ENCODE measurements at regions of chr10 and their contacts with region 1.

Region 1: DNA sequence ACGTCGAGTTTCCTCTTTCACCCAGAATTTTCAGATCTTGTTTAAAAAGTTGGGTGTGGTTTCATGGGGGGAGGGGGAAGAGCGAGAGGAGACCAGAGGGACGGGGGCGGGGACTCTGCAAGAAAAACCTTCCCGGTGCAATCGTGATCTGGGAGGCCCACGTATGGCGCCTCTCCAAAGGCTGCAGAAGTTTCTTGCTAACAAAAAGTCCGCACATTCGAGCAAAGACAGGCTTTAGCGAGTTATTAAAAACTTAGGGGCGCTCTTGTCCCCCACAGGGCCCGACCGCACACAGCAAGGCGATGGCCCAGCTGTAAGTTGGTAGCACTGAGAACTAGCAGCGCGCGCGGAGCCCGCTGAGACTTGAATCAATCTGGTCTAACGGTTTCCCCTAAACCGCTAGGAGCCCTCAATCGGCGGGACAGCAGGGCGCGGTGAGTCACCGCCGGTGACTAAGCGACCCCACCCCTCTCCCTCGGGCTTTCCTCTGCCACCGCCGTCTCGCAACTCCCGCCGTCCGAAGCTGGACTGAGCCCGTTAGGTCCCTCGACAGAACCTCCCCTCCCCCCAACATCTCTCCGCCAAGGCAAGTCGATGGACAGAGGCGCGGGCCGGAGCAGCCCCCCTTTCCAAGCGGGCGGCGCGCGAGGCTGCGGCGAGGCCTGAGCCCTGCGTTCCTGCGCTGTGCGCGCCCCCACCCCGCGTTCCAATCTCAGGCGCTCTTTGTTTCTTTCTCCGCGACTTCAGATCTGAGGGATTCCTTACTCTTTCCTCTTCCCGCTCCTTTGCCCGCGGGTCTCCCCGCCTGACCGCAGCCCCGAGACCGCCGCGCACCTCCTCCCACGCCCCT is at the start of gene VIM:
- DNase-seq: peak; percentile 97
- H3K4me3 ChIP-seq: peak within 1 kb of the TSS; percentile 70 to 89 (median 81)
- H3K27ac ChIP-seq: peak within 1 kb of the TSS; percentile 93
- H3K4me1 ChIP-seq: peaks cover 24% of the 10 kb centered on the region
- H3K27me3 ChIP-seq: no peaks in the 10 kb centered on the region
- CTCF ChIP-seq: peak in 1 of 2 donors; percentile 7
- total RNA-seq, gene VIM: 1,327 to 1,978 TPM

Region 2: DNA sequence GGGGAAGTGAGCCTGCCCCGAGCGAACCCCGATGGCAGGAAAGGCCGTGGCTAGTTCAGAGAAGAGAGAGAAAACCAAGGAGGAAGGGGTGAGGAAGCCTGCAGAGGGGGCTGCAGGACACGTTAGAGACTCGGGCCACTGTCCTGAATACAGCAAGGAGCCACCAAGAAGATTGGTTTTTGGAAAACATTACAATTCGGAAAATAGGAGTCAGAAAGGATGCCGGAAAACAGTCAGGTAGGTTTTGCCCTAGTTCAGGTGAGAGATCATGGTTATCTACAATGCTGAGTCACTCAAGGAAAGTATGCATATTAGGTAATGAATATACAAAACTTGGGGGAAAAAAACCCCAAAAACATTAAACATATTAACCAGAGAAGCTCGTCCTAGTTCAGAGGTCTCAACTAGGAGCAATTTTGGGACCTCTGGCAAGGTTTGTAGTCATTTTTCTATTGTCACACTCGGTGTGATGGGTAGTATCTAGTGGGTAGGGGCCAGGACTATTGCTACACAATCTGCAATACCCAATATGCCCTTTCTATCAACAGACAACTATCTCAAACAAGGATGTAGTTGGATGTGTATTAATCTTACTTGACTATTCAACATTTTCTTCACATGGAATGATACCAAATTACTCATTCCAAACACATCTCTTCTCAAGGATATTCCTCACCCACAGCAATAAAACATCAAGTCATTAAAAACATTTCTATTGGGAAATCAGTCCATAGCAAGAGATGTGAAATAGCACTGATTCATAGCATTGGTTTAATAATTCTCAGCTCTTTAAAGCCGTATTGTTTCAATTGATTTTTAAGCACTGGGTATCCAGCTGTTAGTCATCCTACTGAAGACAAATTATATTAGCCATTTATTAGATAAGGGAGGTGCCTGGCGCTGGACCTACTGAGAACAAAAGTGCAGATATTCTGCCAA is 336.7 kb before region 1 on chr10:
- CTCF ChIA-PET with region 1: no interaction called
- dilution Hi-C with region 1: no loop called
- in situ Hi-C with region 1: no loop called
- intact Hi-C with region 1: loop called (anchors 1 kb)
- DNase-seq: peak; percentile 95
- H3K4me3 ChIP-seq: peak overlapping the region; percentile 18 to 31 (median 21)
- H3K27ac ChIP-seq: peak overlapping the region; percentile 99
- H3K4me1 ChIP-seq: peaks cover 6% of the 10 kb centered on the region
- H3K27me3 ChIP-seq: no peaks in the 10 kb centered on the region
- CTCF ChIP-seq: peak; percentile 18 to 60

Region 3: DNA sequence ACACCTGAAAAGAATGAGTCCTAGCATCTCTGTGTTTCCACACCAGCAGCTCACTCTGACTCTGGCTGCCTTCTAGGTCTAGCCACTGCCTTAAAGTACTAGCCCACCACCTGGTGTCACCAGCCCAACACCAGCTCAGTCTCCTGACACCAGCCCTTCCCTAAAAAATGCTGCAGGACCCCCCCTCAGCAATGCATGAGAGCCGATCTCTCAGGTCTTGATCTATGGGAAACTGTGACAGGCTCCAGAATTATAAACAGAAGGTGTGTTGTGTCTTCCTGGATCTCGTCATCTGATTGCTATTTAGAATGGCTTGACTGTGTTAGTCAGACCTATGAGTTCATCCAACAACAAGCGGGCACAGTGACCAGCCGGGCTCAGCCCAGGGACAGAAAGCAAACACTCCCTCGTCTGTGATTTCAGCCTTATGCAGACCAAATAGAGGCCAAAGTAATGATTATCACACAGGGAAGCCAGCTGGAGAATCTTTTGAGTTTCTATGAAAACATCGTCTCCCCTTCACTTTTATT is 165.3 kb before region 1 on chr10:
- CTCF ChIA-PET with region 1: no interaction called
- dilution Hi-C with region 1: no loop called
- in situ Hi-C with region 1: no loop called
- intact Hi-C with region 1: loop called (anchors 5 kb)
- DNase-seq: peak; percentile 94
- H3K4me3 ChIP-seq: peak overlapping the region in 2 of 3 experiments; percentile 10 to 24
- H3K27ac ChIP-seq: peak overlapping the region; percentile 99
- H3K4me1 ChIP-seq: peaks cover 43% of the 10 kb centered on the region
- H3K27me3 ChIP-seq: no peaks in the 10 kb centered on the region
- CTCF ChIP-seq: no peak

Region 4: DNA sequence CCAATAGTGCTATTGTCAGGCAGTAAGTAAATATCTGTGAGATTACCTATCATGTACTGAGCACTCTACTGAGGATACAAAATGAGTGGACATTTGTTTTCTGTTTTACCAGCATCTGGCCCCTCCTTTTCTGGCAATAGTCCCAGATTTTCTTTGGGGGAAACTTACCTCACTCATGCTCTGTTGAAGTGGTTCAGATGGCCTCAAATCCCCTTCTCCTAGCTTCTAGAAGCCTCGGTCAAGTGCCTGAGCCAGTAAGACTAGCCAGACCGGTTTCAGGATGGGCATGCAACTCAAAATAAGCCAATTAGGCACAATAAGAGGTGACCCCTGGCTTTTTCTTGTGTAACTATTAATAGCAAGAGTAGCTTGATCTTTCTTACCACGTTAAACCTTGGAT is 46.6 kb before region 1 on chr10:
- CTCF ChIA-PET with region 1: no interaction called
- dilution Hi-C with region 1: no loop called
- in situ Hi-C with region 1: no loop called
- intact Hi-C with region 1: loop called (anchors 10 kb)
- DNase-seq: no peak
- H3K4me3 ChIP-seq: no peak overlapping the region
- H3K27ac ChIP-seq: no peak overlapping the region
- H3K4me1 ChIP-seq: no peaks in the 10 kb centered on the region
- H3K27me3 ChIP-seq: no peaks in the 10 kb centered on the region
- CTCF ChIP-seq: no peak

Region 5: DNA sequence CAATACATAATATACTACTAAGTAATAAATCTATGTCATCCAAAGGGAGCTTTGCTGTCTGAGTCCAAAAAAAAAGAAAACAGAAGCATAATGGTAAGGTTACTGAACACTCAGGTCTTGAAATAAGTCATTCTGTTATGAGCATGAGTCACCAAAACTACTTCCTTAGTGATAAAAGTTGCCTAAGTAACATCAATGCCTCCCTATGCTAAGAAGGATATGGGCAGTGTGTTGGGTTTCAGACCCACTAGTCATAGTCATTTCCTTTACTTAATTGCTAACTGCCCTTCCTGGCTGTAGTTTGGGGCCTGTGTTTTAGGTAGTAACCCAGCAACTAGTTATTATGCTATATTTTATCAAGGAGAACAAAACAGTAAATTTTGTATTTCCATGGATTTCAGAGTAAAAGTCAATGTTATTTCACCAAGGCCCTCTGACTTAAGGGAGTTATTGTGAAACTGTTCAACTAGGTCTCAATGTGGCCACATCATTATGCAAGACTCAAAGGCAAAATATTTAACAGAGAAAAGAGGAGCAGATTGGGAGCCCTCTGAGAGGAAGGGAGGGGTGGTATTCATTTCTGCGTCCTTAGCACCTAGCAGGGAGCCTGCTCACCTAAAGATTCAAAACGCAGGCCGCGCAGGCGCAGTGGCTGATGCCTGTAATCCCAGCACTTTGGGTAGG is 12.0 kb before region 1 on chr10:
- CTCF ChIA-PET with region 1: interaction called, 4 read pairs
- dilution Hi-C with region 1: no loop called
- in situ Hi-C with region 1: no loop called
- intact Hi-C with region 1: loop called (anchors 1 kb)
- DNase-seq: peak; percentile 97
- H3K4me3 ChIP-seq: no peak overlapping the region
- H3K27ac ChIP-seq: peak overlapping the region; percentile 100
- H3K4me1 ChIP-seq: peaks cover 43% of the 10 kb centered on the region
- H3K27me3 ChIP-seq: no peaks in the 10 kb centered on the region
- CTCF ChIP-seq: no peak

Measured in mammary epithelial cell (primary cell).